Activated B cell treated with CpG ODN at 0.5 μM for 24 hours (primary cell): ENCODE measurements at regions of chr1 and their contacts with region 1.

Region 1: DNA sequence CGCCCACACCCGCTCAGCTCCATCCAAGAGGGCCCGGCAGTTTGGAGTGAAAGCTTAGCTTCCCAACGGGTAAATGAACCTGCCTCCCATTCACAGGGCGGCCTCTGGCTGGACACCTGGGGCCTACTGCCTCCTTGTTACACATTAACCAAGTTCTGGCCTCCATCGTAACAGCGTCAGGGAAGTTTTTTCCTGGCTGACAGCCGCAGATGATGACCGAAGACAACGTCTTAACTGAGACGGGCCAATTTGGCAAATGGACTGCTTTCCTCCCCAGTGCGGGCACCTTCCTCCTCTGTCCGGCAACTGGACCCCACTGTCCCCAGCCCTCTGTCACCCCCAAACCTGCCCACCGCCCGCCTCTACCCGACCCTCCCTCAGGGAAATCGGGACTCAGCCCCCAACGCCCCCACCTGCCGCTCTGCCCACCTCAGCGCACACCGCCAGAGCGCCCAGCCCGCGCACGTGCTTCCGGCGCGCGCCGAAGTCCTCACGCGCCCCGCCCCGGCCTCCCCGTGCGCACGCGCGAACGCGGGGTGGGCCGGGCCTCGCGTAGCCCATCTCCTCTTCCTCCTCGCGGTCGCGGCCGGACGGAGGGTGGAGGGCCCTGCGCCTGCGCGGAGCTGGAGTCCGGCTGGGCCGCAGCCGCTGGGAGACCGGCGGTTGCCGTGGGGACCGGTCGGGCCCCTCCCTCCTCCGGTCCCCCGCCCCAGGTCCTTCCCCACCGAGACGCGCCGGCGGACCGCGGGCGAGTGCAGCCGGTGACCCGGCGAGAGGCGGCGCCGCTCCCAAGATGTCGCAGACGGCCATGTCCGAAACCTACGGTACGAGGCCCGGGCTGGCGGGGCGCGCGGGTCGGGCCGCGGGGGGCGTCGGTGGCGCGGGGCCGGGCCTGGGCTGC is at the start of gene RAB4A:
- DNase-seq: peak; percentile 87
- ATAC-seq: peak; percentile 93
- H3K4me3 Mint-ChIP-seq: peak within 1 kb of the TSS; percentile 91
- H3K27ac Mint-ChIP-seq: peak within 1 kb of the TSS; percentile 87
- H3K4me1 Mint-ChIP-seq: peaks cover 34% of the 10 kb centered on the region
- H3K27me3 Mint-ChIP-seq: no peaks in the 10 kb centered on the region
- CTCF ChIP-seq: no peak
- total RNA-seq, gene RAB4A: 40.2 and 42.3 TPM in 2 replicates

Region 2: DNA sequence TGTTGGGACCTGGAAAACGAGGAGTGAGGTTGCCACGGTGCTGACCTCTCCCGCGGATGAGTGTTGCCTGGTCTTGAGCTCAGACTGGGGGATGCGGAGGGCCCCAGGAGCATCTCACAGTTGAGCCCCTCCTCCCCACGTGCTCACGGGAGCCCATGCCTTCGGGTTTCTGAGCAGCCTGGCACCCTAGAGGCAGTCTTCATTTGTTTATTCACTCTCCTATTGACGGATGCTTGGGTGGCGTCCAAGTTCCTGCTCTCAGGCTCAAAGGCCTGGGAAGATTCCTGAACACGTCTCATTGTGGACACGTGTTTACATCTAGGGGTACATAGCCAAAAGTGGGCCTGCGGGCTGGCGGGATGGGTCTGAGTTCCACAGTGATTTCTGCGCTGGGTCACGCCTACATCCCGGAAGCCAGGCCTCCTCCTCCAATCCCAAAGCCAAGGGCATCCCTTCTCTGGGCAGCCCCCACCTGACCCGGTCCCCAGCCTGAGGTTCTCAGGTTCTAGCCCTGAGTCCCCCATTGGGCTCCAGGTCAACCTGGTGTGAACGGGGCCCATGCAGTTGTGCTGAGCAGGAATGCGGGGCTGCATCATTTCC is 1249.3 kb before region 1 on chr1:
- CTCF ChIA-PET with region 1: no interaction called
- POLR2A ChIA-PET with region 1: no interaction called
- intact Hi-C with region 1: no loop called
- DNase-seq: no peak
- ATAC-seq: no peak
- H3K4me3 Mint-ChIP-seq: no peak overlapping the region
- H3K27ac Mint-ChIP-seq: no peak overlapping the region
- H3K4me1 Mint-ChIP-seq: no peaks in the 10 kb centered on the region
- H3K27me3 Mint-ChIP-seq: peaks cover 5% of the 10 kb centered on the region
- CTCF ChIP-seq: no peak

Region 3: GRCh38 chr1:229075217-229075616 is 195.6 kb before region 1 on chr1:
- CTCF ChIA-PET with region 1: no interaction called
- POLR2A ChIA-PET with region 1: no interaction called
- intact Hi-C with region 1: no loop called
- DNase-seq: no peak
- ATAC-seq: no peak
- H3K4me3 Mint-ChIP-seq: no peak overlapping the region
- H3K27ac Mint-ChIP-seq: no peak overlapping the region
- H3K4me1 Mint-ChIP-seq: no peaks in the 10 kb centered on the region
- H3K27me3 Mint-ChIP-seq: no peaks in the 10 kb centered on the region
- CTCF ChIP-seq: no peak

Region 4: GRCh38 chr1:229186373-229187056 is 84.3 kb before region 1 on chr1:
- CTCF ChIA-PET with region 1: no interaction called
- POLR2A ChIA-PET with region 1: no interaction called
- intact Hi-C with region 1: no loop called
- DNase-seq: no peak
- ATAC-seq: no peak
- H3K4me3 Mint-ChIP-seq: no peak overlapping the region
- H3K27ac Mint-ChIP-seq: no peak overlapping the region
- H3K4me1 Mint-ChIP-seq: no peaks in the 10 kb centered on the region
- H3K27me3 Mint-ChIP-seq: peaks cover 6% of the 10 kb centered on the region
- CTCF ChIP-seq: no peak

Region 5: GRCh38 chr1:229287267-229287666 is 16.5 kb after region 1 on chr1:
- CTCF ChIA-PET with region 1: no interaction called
- POLR2A ChIA-PET with region 1: interaction called, 11 read pairs
- intact Hi-C with region 1: no loop called
- DNase-seq: no peak
- ATAC-seq: no peak
- H3K4me3 Mint-ChIP-seq: no peak overlapping the region
- H3K27ac Mint-ChIP-seq: no peak overlapping the region
- H3K4me1 Mint-ChIP-seq: peaks cover 18% of the 10 kb centered on the region
- H3K27me3 Mint-ChIP-seq: no peaks in the 10 kb centered on the region
- CTCF ChIP-seq: no peak

Region 6: GRCh38 chr1:229341774-229342655 is 71.2 kb after region 1 on chr1:
- CTCF ChIA-PET with region 1: no interaction called
- POLR2A ChIA-PET with region 1: interaction called, 15 read pairs
- intact Hi-C with region 1: loop called (anchors 1 kb)
- DNase-seq: peak; percentile 85
- ATAC-seq: peak; percentile 82
- H3K4me3 Mint-ChIP-seq: peak overlapping the region; percentile 91
- H3K27ac Mint-ChIP-seq: peak overlapping the region; percentile 80
- H3K4me1 Mint-ChIP-seq: peaks cover 38% of the 10 kb centered on the region
- H3K27me3 Mint-ChIP-seq: peaks cover 8% of the 10 kb centered on the region
- CTCF ChIP-seq: no peak

Region 7: GRCh38 chr1:229440851-229441537 is 170.2 kb after region 1 on chr1:
- CTCF ChIA-PET with region 1: no interaction called
- POLR2A ChIA-PET with region 1: no interaction called
- intact Hi-C with region 1: loop called (anchors 1 kb)
- DNase-seq: no peak
- ATAC-seq: peak; percentile 78
- H3K4me3 Mint-ChIP-seq: no peak overlapping the region
- H3K27ac Mint-ChIP-seq: peak overlapping the region; percentile 67
- H3K4me1 Mint-ChIP-seq: peaks cover 8% of the 10 kb centered on the region
- H3K27me3 Mint-ChIP-seq: no peaks in the 10 kb centered on the region
- CTCF ChIP-seq: no peak

Region 8: GRCh38 chr1:229507951-229508822 is 237.4 kb after region 1 on chr1 and contains the start of gene NUP133:
- CTCF ChIA-PET with region 1: no interaction called
- POLR2A ChIA-PET with region 1: interaction called, 22 read pairs
- intact Hi-C with region 1: loop called (anchors 1 kb)
- DNase-seq: peak; percentile 97
- ATAC-seq: peak; percentile 92
- H3K4me3 Mint-ChIP-seq: peak within 1 kb of the TSS; percentile 90
- H3K27ac Mint-ChIP-seq: peak within 1 kb of the TSS; percentile 97
- H3K4me1 Mint-ChIP-seq: peaks cover 26% of the 10 kb centered on the region
- H3K27me3 Mint-ChIP-seq: peaks cover 1% of the 10 kb centered on the region
- CTCF ChIP-seq: no peak
- total RNA-seq, gene NUP133: 49.6 and 56.2 TPM in 2 replicates

Region 9: GRCh38 chr1:229558571-229559335 is 288.0 kb after region 1 on chr1 and contains the start of gene ABCB10:
- CTCF ChIA-PET with region 1: no interaction called
- POLR2A ChIA-PET with region 1: no interaction called
- intact Hi-C with region 1: loop called (anchors 2 kb)
- DNase-seq: peak; percentile 91
- ATAC-seq: peak; percentile 80
- H3K4me3 Mint-ChIP-seq: peak within 1 kb of the TSS; percentile 95
- H3K27ac Mint-ChIP-seq: peak within 1 kb of the TSS; percentile 90
- H3K4me1 Mint-ChIP-seq: peaks cover 31% of the 10 kb centered on the region
- H3K27me3 Mint-ChIP-seq: no peaks in the 10 kb centered on the region
- CTCF ChIP-seq: no peak
- total RNA-seq, gene ABCB10: 11.7 and 14.5 TPM in 2 replicates

Region 10: DNA sequence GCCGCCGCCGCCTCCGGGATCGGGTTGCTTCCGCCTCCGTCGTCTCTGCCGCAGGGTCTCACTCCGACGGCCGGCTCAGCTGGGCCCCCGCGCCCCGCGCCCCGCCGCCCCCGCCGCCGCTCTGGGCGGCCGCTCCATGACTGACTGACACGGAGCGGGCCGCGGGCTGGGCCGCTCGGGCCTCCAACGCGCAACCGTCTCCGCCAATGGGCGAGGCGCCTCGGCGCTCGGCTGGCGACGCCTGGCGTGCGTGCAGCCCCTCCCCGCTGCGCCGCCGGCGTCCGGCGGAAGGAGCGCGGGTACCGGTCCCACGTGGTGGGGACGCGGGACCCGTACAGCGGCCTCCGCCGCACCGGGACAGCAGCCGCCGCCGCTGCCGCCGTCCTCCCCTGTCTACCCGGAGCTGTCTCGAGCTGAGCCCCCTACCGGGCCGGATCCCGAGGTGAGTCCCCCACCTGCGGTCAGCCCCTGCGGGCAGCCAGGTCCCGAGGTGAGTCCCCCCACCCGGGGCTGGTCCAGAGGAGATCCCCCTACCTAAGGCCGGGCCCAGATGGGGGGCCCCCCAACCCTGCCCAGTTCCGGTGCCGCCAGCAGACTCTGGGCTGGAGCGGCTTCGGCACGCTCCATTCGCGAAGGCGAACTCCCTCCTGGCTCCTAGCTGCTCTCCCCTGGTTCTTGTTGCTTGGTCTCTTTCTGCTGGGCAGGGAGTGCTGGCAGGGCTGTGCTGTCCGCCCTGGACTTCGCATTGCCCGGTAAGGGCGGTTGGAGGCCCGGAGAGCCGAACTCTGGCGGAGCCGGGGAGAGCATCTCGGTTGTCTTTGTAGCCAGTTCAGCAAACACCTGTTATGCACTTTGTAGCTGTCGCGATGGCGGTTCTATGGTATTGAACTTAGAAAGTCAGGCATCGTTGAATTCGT is 355.4 kb after region 1 on chr1 and contains the starts of genes TAF5L and URB2:
- CTCF ChIA-PET with region 1: no interaction called
- POLR2A ChIA-PET with region 1: no interaction called
- intact Hi-C with region 1: loop called (anchors 2 kb)
- DNase-seq: peak; percentile 86
- ATAC-seq: peak; percentile 92
- H3K4me3 Mint-ChIP-seq: peak within 1 kb of the TSS; percentile 99
- H3K27ac Mint-ChIP-seq: peak within 1 kb of the TSS; percentile 92
- H3K4me1 Mint-ChIP-seq: peaks cover 58% of the 10 kb centered on the region
- H3K27me3 Mint-ChIP-seq: no peaks in the 10 kb centered on the region
- CTCF ChIP-seq: no peak
- total RNA-seq, gene TAF5L: 22.0 and 24.4 TPM in 2 replicates
- total RNA-seq, gene URB2: 17.4 and 21.8 TPM in 2 replicates